Activated B cell treated with CpG ODN at 0.5 μM for 24 hours (primary cell): ENCODE measurements at regions of chr12 and their contacts with region 1.

Region 1: GRCh38 chr12:26028953-26029735 is 70.7 kb downstream of the RASSF8 start:
- DNase-seq: no peak
- ATAC-seq: no peak
- H3K4me3 Mint-ChIP-seq: no peak overlapping the region
- H3K27ac Mint-ChIP-seq: no peak overlapping the region
- H3K4me1 Mint-ChIP-seq: no peaks in the 10 kb centered on the region
- H3K27me3 Mint-ChIP-seq: peaks cover 5% of the 10 kb centered on the region
- CTCF ChIP-seq: peak; percentile 96

Region 2: GRCh38 chr12:25557830-25558436 is 471.2 kb before region 1 on chr12:
- CTCF ChIA-PET with region 1: no interaction called
- POLR2A ChIA-PET with region 1: no interaction called
- intact Hi-C with region 1: loop called (anchors 5 kb)
- DNase-seq: no peak
- ATAC-seq: no peak
- H3K4me3 Mint-ChIP-seq: no peak overlapping the region
- H3K27ac Mint-ChIP-seq: no peak overlapping the region
- H3K4me1 Mint-ChIP-seq: no peaks in the 10 kb centered on the region
- H3K27me3 Mint-ChIP-seq: peaks cover 4% of the 10 kb centered on the region
- CTCF ChIP-seq: no peak

Region 3: GRCh38 chr12:26047401-26048226 is 18.5 kb after region 1 on chr12:
- CTCF ChIA-PET with region 1: no interaction called
- POLR2A ChIA-PET with region 1: no interaction called
- intact Hi-C with region 1: no loop called
- DNase-seq: no peak
- ATAC-seq: no peak
- H3K4me3 Mint-ChIP-seq: no peak overlapping the region
- H3K27ac Mint-ChIP-seq: no peak overlapping the region
- H3K4me1 Mint-ChIP-seq: no peaks in the 10 kb centered on the region
- H3K27me3 Mint-ChIP-seq: peaks cover 3% of the 10 kb centered on the region
- CTCF ChIP-seq: no peak

Region 4: DNA sequence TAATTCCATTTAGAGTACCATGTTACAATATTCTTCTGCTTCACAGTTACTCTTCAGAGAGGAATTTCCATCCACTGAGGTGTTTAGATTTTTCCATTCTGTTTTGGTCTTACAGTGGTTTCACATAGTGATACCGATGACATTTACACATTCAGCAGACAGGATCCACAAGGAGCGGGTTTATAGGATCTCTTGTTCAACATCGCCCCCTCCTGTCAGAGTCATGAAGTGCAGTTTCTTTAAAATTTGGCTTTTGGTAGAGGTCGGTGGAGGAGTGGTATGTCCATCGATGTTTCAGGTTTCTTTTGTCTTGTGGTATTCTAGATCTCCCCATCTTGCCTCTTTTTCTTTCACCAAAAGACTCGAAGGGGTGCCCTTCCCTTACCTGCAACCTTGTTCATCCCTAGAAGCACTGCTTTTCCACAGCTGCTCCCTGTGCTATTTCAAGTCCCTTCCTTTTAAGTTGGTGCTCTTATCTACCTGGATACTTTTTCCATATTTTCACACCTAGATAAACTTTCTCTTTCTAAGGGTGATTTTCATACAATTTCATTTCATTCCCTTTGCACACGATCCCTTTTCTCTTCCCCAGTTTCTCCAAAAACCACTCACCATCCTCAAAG is 622.5 kb after region 1 on chr12:
- CTCF ChIA-PET with region 1: interaction called, 3 read pairs
- POLR2A ChIA-PET with region 1: no interaction called
- intact Hi-C with region 1: loop called (anchors 5 kb)
- DNase-seq: no peak
- ATAC-seq: peak; percentile 62
- H3K4me3 Mint-ChIP-seq: no peak overlapping the region
- H3K27ac Mint-ChIP-seq: no peak overlapping the region
- H3K4me1 Mint-ChIP-seq: no peaks in the 10 kb centered on the region
- H3K27me3 Mint-ChIP-seq: no peaks in the 10 kb centered on the region
- CTCF ChIP-seq: no peak